ENCODE measurements at regions of chr7 and their contacts with region 1.

Region 1: DNA sequence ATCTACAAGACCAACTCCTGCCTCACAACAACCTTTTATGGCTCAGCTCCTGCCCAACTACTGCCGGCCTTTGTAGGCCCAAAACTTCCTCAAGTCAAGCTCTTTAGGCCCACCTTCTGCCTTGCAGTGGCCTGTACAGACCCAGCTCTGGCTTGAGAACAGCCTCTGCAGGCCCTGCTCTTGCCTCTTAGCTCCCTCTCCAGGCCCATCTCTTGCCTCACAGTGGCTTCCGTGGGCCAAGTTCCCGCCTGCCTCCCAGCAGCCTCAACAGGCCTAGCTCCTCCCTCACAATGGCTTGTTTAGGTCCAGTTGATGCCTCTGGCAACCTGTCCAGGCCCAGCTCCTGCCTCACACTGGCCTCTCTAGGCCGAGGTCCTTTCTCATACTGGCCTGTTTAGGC is 32.4 kb upstream of the VKORC1L1 start:
- DNase-seq: peak; percentile 39
- ATAC-seq: peak; percentile 100
- H3K4me3 ChIP-seq: no peak overlapping the region
- H3K27ac ChIP-seq: no peak overlapping the region
- H3K4me1 ChIP-seq: no peaks in the 10 kb centered on the region
- H3K27me3 ChIP-seq: no peaks in the 10 kb centered on the region
- CTCF ChIP-seq: peak; percentile 86 to 92 (median 88)
- EP300 ChIP-seq: no peak
- POLR2A ChIP-seq: no peak
- RAD21 ChIP-seq: peak; percentile 96

Region 2: GRCh38 chr7:65722345-65722792 is 118.1 kb before region 1 on chr7:
- CTCF ChIA-PET with region 1: interaction called, 75 read pairs
- POLR2A ChIA-PET with region 1: no interaction called
- RAD21 ChIA-PET with region 1: interaction called, 49 read pairs
- SMC1A ChIA-PET with region 1: interaction called, 33 read pairs
- in situ Hi-C with region 1: no loop called
- intact Hi-C with region 1: loop called (anchors 1 kb)
- DNase-seq: peak; percentile 7
- ATAC-seq: peak; percentile 89
- H3K4me3 ChIP-seq: no peak overlapping the region
- H3K27ac ChIP-seq: no peak overlapping the region
- H3K4me1 ChIP-seq: no peaks in the 10 kb centered on the region
- H3K27me3 ChIP-seq: no peaks in the 10 kb centered on the region
- CTCF ChIP-seq: peak; percentile 81 to 85 (median 81)
- EP300 ChIP-seq: no peak
- POLR2A ChIP-seq: no peak
- RAD21 ChIP-seq: peak; percentile 95

Region 3: DNA sequence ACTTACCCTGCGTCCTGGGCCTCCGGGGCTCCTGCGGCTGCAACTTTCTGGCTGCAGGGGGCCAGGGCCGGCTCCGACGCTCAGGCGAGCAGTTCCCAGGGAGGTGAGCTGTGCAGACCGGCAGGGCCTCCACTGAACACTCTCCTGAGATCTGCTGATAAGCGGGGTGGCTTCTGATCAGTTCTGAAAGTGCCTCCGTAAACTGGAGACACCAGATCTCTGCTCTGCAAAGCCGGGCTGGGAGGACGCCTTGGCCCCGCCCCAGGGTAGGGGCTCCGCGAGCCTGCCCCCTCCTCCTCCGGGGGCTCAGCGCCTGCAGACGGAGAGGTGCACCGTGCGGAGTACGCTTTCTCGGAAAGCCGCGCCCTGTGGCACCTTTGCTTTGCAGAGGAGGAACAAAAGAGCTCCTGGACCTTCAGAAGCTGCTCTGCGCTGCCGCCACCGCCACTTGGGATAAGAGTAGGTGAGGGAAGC is 108.8 kb before region 1 on chr7:
- CTCF ChIA-PET with region 1: interaction called, 31 read pairs
- POLR2A ChIA-PET with region 1: interaction called, 3 read pairs
- RAD21 ChIA-PET with region 1: interaction called, 7 read pairs
- SMC1A ChIA-PET with region 1: interaction called, 6 read pairs
- in situ Hi-C with region 1: no loop called
- intact Hi-C with region 1: loop called (anchors 1 kb)
- DNase-seq: no peak
- ATAC-seq: no peak
- H3K4me3 ChIP-seq: no peak overlapping the region
- H3K27ac ChIP-seq: no peak overlapping the region
- H3K4me1 ChIP-seq: no peaks in the 10 kb centered on the region
- H3K27me3 ChIP-seq: no peaks in the 10 kb centered on the region
- CTCF ChIP-seq: no peak
- EP300 ChIP-seq: no peak
- POLR2A ChIP-seq: no peak
- RAD21 ChIP-seq: no peak

Region 4: GRCh38 chr7:65750511-65751344 is 89.7 kb before region 1 on chr7:
- CTCF ChIA-PET with region 1: interaction called, 39 read pairs
- POLR2A ChIA-PET with region 1: interaction called, 6 read pairs
- RAD21 ChIA-PET with region 1: interaction called, 31 read pairs
- SMC1A ChIA-PET with region 1: interaction called, 44 read pairs
- in situ Hi-C with region 1: no loop called
- intact Hi-C with region 1: no loop called
- DNase-seq: peak; percentile 55
- ATAC-seq: peak; percentile 98
- H3K4me3 ChIP-seq: peak overlapping the region; percentile 92
- H3K27ac ChIP-seq: peak overlapping the region; percentile 86
- H3K4me1 ChIP-seq: 0 out of 2 replicates have a peak, but pooled peaks cover 3% of the 10 kb centered on the region
- H3K27me3 ChIP-seq: no peaks in the 10 kb centered on the region
- CTCF ChIP-seq: no peak
- EP300 ChIP-seq: no peak
- POLR2A ChIP-seq: peak; percentile 91
- RAD21 ChIP-seq: no peak

Region 5: GRCh38 chr7:65798111-65799075 is 42.1 kb before region 1 on chr7:
- CTCF ChIA-PET with region 1: interaction called, 12 read pairs
- POLR2A ChIA-PET with region 1: no interaction called
- RAD21 ChIA-PET with region 1: interaction called, 3 read pairs
- SMC1A ChIA-PET with region 1: interaction called, 8 read pairs
- in situ Hi-C with region 1: no loop called
- intact Hi-C with region 1: no loop called
- DNase-seq: peak; percentile 67
- ATAC-seq: peak; percentile 96
- H3K4me3 ChIP-seq: no peak overlapping the region
- H3K27ac ChIP-seq: peak overlapping the region; percentile 86
- H3K4me1 ChIP-seq: peaks cover 12% of the 10 kb centered on the region
- H3K27me3 ChIP-seq: no peaks in the 10 kb centered on the region
- CTCF ChIP-seq: no peak
- EP300 ChIP-seq: peak; percentile 52 to 83; a peak in 3 of 4 replicates
- POLR2A ChIP-seq: no peak
- RAD21 ChIP-seq: no peak

Region 6: GRCh38 chr7:65809259-65809981 is 31.0 kb before region 1 on chr7:
- CTCF ChIA-PET with region 1: interaction called, 16 read pairs
- POLR2A ChIA-PET with region 1: no interaction called
- RAD21 ChIA-PET with region 1: interaction called, 24 read pairs
- SMC1A ChIA-PET with region 1: interaction called, 26 read pairs
- in situ Hi-C with region 1: no loop called
- intact Hi-C with region 1: no loop called
- DNase-seq: peak; percentile 95
- ATAC-seq: peak; percentile 91
- H3K4me3 ChIP-seq: peak overlapping the region; percentile 53; the same call in 1 of the 2 replicates
- H3K27ac ChIP-seq: peak overlapping the region; percentile 71
- H3K4me1 ChIP-seq: peaks cover 16% of the 10 kb centered on the region
- H3K27me3 ChIP-seq: no peaks in the 10 kb centered on the region
- CTCF ChIP-seq: no peak
- EP300 ChIP-seq: peak; percentile 71 to 81; a peak in 3 of 4 replicates
- POLR2A ChIP-seq: no peak
- RAD21 ChIP-seq: no peak

Region 7: DNA sequence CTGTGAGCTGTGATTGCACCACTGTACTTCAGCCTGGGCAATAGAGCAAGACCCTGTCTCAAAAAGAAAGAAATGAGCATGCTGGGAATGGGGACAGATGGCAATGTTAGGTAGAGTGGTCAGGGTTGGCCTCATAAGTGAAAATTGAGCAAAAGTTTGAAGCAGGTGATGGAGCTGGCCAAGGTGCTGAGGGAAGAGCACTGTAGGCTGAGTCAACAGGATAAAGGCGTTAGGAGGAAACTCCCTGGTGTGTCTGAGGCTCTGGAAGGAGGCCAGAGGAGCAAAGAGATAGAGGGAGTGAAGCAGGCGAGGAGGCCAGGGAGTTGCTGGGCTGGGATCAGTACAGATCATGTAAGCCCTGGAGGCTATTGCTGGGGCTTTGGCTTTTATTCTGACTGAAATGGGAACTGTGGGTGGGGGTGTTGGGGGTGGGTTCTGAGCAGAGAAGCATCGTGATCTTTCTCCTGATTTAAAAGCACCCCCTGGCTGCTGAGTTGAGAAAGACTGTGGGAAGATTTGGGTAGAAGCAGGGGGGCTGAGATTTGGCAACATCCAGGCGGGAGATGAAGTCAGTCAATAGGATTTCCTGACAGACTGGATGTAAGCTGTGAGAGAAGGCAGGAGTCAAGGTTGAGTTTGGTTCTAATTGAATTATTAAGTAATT is 20.0 kb before region 1 on chr7:
- CTCF ChIA-PET with region 1: interaction called, 17 read pairs
- POLR2A ChIA-PET with region 1: no interaction called
- RAD21 ChIA-PET with region 1: interaction called, 3 read pairs
- SMC1A ChIA-PET with region 1: interaction called, 4 read pairs
- in situ Hi-C with region 1: no loop called
- intact Hi-C with region 1: no loop called
- DNase-seq: no peak
- ATAC-seq: no peak; the same call in 2 of the 3 replicates
- H3K4me3 ChIP-seq: no peak overlapping the region
- H3K27ac ChIP-seq: no peak overlapping the region
- H3K4me1 ChIP-seq: no peaks in the 10 kb centered on the region
- H3K27me3 ChIP-seq: no peaks in the 10 kb centered on the region
- CTCF ChIP-seq: peak in 1 of 3 experiments; percentile 27; a peak in 2 of 6 replicates
- EP300 ChIP-seq: no peak
- POLR2A ChIP-seq: no peak
- RAD21 ChIP-seq: peak; percentile 50

Measured in GM12878 (cell line).